ENCODE measurements at regions of chr2 and their contacts with region 1.

Region 1: DNA sequence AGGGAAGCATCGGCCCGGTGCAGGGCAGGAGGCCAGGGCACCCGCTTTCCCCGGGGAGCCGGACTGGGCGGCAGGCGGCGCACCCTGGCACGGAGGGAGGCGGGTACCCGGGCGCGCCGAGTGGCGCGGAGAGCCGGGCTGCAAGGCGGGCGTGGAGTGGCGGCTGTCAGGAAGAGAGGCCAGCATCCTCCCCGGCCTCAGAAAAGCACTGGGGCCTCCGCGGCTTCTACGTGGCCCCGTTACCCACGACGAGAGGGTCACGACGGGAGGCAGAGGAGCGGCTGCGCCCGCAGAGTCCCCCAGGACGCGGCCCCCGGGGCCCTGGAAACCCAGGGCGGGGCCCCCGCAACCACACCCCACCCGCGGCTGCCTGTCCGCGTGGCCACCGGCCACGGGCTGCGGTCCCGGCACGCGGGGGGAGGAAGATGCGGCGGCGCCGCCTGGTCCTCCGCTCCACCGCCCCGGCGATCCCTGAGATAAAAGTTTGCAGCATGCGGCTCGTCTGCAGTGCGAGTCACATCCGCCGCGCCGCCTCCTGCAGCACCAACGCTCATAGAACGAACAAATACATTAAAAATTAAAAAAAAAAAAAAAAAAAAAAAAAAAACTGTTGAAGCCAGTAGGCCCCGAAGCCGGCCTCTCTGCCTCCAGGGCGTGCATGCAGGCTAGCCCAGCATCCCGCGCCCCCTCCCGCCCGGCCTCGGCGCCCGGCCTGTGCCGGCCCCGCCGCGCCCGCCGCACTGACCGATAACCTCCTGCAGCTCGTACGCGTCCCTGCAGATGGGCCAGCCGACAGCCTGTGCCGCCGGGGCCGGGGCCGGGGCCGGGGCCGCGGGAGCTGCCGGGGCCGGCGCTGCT is 683 bp downstream of the STK39 start:
- DNase-seq: peak; percentile 64
- ATAC-seq: peak; percentile 47
- H3K4me3 Mint-ChIP-seq: peak overlapping the region; percentile 87
- H3K27ac Mint-ChIP-seq: peak overlapping the region; percentile 80
- H3K4me1 Mint-ChIP-seq: peaks cover 31% of the 10 kb centered on the region
- H3K27me3 Mint-ChIP-seq: no peaks in the 10 kb centered on the region
- CTCF ChIP-seq: no peak

Region 2: DNA sequence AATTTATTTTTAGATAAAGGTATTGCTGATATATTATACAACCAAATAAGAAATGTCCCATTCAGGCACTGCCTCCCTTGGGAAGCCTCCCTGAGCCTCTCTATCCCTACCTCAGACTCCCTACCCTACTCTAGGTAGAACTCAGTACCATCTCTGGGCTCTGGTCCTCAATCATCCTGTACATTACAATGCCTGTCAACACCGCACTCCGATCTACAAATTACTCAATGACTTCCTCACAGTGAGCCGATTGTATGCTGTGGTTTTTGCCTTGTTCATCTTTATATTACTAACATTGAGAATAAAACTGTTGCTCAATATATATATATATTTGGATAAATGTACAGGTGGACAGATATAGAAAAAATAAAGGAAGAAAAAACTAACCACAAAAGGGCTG is 206.8 kb before region 1 on chr2:
- CTCF ChIA-PET with region 1: no interaction called
- POLR2A ChIA-PET with region 1: no interaction called
- intact Hi-C with region 1: loop called (anchors 5 kb)
- DNase-seq: no peak
- ATAC-seq: peak; percentile 30
- H3K4me3 Mint-ChIP-seq: peak overlapping the region; percentile 2
- H3K27ac Mint-ChIP-seq: no peak overlapping the region
- H3K4me1 Mint-ChIP-seq: peaks cover 83% of the 10 kb centered on the region
- H3K27me3 Mint-ChIP-seq: no peaks in the 10 kb centered on the region
- CTCF ChIP-seq: no peak

Region 3: GRCh38 chr2:168160897-168161296 is 85.8 kb before region 1 on chr2:
- CTCF ChIA-PET with region 1: interaction called, 3 read pairs
- POLR2A ChIA-PET with region 1: interaction called, 3 read pairs
- intact Hi-C with region 1: loop called (anchors 1 kb)
- DNase-seq: no peak
- ATAC-seq: peak; percentile 40
- H3K4me3 Mint-ChIP-seq: no peak overlapping the region
- H3K27ac Mint-ChIP-seq: no peak overlapping the region
- H3K4me1 Mint-ChIP-seq: peaks cover 9% of the 10 kb centered on the region
- H3K27me3 Mint-ChIP-seq: no peaks in the 10 kb centered on the region
- CTCF ChIP-seq: no peak

Region 4: GRCh38 chr2:168210895-168211570 is 35.7 kb before region 1 on chr2:
- CTCF ChIA-PET with region 1: no interaction called
- POLR2A ChIA-PET with region 1: interaction called, 6 read pairs
- intact Hi-C with region 1: loop called (anchors 1 kb)
- DNase-seq: no peak
- ATAC-seq: peak; percentile 65
- H3K4me3 Mint-ChIP-seq: peak overlapping the region; percentile 60
- H3K27ac Mint-ChIP-seq: peak overlapping the region; percentile 87
- H3K4me1 Mint-ChIP-seq: peaks cover 55% of the 10 kb centered on the region
- H3K27me3 Mint-ChIP-seq: no peaks in the 10 kb centered on the region
- CTCF ChIP-seq: no peak

Region 5: GRCh38 chr2:168231609-168232241 is 15.0 kb before region 1 on chr2:
- CTCF ChIA-PET with region 1: no interaction called
- POLR2A ChIA-PET with region 1: no interaction called
- intact Hi-C with region 1: no loop called
- DNase-seq: no peak
- ATAC-seq: no peak
- H3K4me3 Mint-ChIP-seq: no peak overlapping the region
- H3K27ac Mint-ChIP-seq: no peak overlapping the region
- H3K4me1 Mint-ChIP-seq: peaks cover 5% of the 10 kb centered on the region
- H3K27me3 Mint-ChIP-seq: no peaks in the 10 kb centered on the region
- CTCF ChIP-seq: no peak

Region 6: GRCh38 chr2:168490015-168490874 is 243.5 kb after region 1 on chr2:
- CTCF ChIA-PET with region 1: no interaction called
- POLR2A ChIA-PET with region 1: interaction called, 4 read pairs
- intact Hi-C with region 1: loop called (anchors 10 kb)
- DNase-seq: no peak
- ATAC-seq: peak; percentile 86
- H3K4me3 Mint-ChIP-seq: peak overlapping the region; percentile 66
- H3K27ac Mint-ChIP-seq: peak overlapping the region; percentile 88
- H3K4me1 Mint-ChIP-seq: peaks cover 35% of the 10 kb centered on the region
- H3K27me3 Mint-ChIP-seq: no peaks in the 10 kb centered on the region
- CTCF ChIP-seq: no peak

Measured in activated B cell treated with CpG ODN at 0.5 μM for 24 hours (primary cell).